ENCODE measurements at regions of chr12 and their contacts with region 1.

Region 1: GRCh38 chr12:76569685-76570604 is 10.4 kb upstream of the OSBPL8 start:
- DNase-seq: no peak
- H3K4me3 ChIP-seq: no peak overlapping the region
- H3K27ac ChIP-seq: no peak overlapping the region
- H3K4me1 ChIP-seq: no peaks in the 10 kb centered on the region
- H3K27me3 ChIP-seq: no peaks in the 10 kb centered on the region
- CTCF ChIP-seq: no peak
- POLR2A ChIP-seq: no peak

Region 2: GRCh38 chr12:75877763-75878621 is 692.0 kb before region 1 on chr12:
- intact Hi-C with region 1: no loop called
- DNase-seq: no peak
- H3K4me3 ChIP-seq: peak overlapping the region in 1 of 3 donors; percentile 13
- H3K27ac ChIP-seq: no peak overlapping the region
- H3K4me1 ChIP-seq: peaks cover 0 to 2% of the 10 kb centered on the region in 2 donors
- H3K27me3 ChIP-seq: no peaks in the 10 kb centered on the region
- CTCF ChIP-seq: no peak
- POLR2A ChIP-seq: no peak

Region 3: GRCh38 chr12:76037130-76038103 is 532.5 kb before region 1 on chr12:
- intact Hi-C with region 1: no loop called
- DNase-seq: no peak
- H3K4me3 ChIP-seq: no peak overlapping the region
- H3K27ac ChIP-seq: no peak overlapping the region
- H3K4me1 ChIP-seq: no peaks in the 10 kb centered on the region
- H3K27me3 ChIP-seq: no peaks in the 10 kb centered on the region
- CTCF ChIP-seq: peak; percentile 57 to 90 (median 83)
- POLR2A ChIP-seq: no peak

Region 4: GRCh38 chr12:76489737-76490136 is 80.2 kb before region 1 on chr12:
- intact Hi-C with region 1: no loop called
- DNase-seq: no peak
- H3K4me3 ChIP-seq: no peak overlapping the region
- H3K27ac ChIP-seq: no peak overlapping the region
- H3K4me1 ChIP-seq: no peaks in the 10 kb centered on the region
- H3K27me3 ChIP-seq: no peaks in the 10 kb centered on the region
- CTCF ChIP-seq: no peak
- POLR2A ChIP-seq: no peak

Region 5: DNA sequence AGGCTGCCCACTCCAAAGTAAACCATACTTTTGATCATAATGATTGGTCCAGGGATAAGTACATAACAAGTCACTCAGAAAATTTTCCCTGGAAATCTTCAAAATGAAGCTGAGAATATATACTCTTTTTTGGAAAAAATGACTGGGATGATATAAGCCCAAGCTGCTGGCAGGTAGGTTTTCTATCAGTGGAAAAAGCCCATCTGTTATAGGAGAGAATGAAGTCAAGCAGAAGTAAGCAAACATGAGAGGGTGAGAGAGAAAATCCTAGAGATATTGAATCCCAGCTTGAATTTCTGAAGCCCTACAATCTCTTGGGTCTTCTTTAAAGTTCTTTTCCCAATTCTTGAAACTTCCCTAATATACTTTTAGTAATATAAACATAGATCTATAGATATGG is 156.7 kb after region 1 on chr12:
- intact Hi-C with region 1: no loop called
- DNase-seq: no peak
- H3K4me3 ChIP-seq: no peak overlapping the region
- H3K27ac ChIP-seq: no peak overlapping the region
- H3K4me1 ChIP-seq: no peaks in the 10 kb centered on the region
- H3K27me3 ChIP-seq: no peaks in the 10 kb centered on the region
- CTCF ChIP-seq: no peak
- POLR2A ChIP-seq: no peak

Region 6: DNA sequence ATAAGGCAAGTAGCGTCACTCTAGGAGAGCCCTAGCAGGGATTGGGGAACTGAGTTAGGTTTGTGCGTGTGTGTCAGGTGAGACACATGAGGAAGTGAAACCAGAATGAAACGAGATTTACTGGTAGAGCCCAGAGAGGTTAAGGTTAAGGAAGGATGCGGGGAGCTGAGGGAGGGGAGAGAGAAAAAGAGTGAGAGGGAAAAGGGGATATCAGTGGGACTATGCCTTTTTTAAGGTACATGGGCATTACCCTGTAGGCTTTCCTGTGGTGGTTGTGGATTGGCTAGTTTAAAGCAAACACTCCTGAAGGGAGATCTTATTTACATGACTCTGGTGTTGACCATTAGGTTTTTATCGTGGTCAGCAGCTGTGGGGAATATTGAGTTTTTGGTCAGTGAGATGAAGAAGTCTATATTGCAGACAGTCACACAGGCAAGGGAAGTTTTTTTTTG is 207.8 kb after region 1 on chr12:
- intact Hi-C with region 1: loop called (anchors 5 kb)
- DNase-seq: no peak
- H3K4me3 ChIP-seq: no peak overlapping the region
- H3K27ac ChIP-seq: no peak overlapping the region
- H3K4me1 ChIP-seq: no peaks in the 10 kb centered on the region
- H3K27me3 ChIP-seq: no peaks in the 10 kb centered on the region
- CTCF ChIP-seq: no peak
- POLR2A ChIP-seq: no peak